GM18951 (cell line): ENCODE measurements at regions of chr15 and their contacts with region 1.

Region 1: DNA sequence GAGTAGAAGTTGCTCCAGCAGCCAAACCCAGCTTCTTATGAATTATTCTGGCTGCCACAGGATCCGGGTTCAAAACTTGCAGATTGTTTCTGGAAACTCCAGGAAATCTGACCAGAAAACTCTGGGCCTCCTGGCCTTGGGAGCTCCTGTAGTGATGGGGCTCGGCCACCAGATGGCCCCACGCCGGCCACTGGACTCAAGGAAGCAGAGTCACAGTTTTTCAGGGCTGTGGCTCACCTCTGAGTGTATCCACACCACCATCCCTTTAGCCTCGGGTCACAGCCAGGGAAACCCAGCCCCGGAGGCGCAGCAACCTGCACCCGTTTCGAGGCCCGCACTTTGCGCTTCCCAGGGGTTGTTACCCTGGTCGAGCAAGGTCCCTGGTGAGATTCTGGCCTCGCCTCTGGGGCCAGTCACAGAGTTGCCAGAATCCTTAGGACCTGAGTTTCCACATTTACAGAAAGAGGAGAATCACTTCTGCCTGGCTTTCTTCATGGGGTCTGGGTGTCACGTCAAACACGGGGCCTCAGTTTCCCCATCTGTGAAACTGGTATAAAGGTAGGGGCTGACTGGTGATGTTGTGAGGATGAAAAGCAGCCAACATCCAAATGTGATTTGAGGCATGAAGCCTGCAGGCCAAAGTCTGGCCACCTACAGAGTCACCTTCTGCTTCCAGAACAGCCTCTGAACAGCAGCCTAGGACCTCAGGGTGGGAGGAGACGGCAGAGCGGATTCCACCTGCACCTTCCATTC is 53.5 kb upstream of the LCTL start:
- POLR2A ChIP-seq: no peak

Region 2: GRCh38 chr15:65344214-65344917 is 1275.0 kb before region 1 on chr15:
- in situ Hi-C with region 1: no loop called
- POLR2A ChIP-seq: no peak

Region 3: GRCh38 chr15:66751541-66751952 is 132.2 kb after region 1 on chr15:
- in situ Hi-C with region 1: no loop called
- POLR2A ChIP-seq: no peak

Region 4: DNA sequence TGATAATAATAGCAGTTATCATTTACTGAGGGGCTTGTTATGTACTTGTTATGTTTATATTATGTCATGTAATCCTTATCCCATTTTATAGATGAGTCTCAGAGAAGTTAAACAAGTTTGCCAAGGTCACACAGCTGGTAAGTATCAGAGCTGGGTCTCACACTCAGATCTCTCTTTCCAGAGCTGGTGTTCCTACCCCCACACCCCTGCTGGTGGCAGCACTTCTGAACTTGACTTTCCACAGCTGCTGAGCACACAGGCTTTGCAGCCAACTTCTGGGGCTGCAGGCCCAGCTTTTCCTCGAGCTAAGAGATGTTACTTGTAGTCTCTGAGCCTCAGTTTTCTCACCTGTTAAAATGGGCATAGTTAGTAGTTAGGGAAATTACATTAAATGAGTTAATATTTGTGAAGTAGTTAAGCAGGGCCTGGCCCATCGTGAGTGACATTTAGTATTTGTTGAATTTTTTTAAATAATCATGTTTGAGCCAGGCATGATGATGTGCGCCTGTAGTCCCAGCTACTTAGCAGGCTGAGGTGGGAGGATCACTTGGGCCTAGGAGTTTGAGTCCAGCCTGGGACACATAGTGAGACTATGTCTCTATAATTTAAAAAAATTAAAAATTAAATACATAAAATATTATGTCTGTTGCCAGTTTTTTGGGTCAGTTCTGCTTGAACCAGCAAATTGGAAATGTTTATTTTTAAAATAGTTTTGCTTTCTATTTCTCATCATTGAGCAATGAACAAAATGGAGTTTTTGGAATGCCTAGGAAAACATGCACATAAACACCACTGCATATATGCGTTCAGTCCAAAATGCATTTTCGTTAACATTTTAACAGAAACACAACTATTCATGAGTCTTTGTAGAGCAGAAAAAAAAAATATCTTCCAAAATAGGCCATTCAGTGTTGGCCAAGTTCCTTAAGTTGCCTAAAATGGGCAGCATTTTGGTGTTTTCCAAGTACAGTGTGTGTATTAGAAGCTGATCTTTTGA is 170.0 kb after region 1 on chr15:
- in situ Hi-C with region 1: loop called (anchors 25 kb)
- POLR2A ChIP-seq: no peak